ENCODE measurements at regions of chr10 and their contacts with region 1.

Region 1: GRCh38 chr10:28302638-28303488 is at the start of gene MPP7:
- DNase-seq: peak; percentile 100
- H3K4me3 ChIP-seq: peak within 1 kb of the TSS; percentile 75
- H3K4me3 Mint-ChIP-seq: peak within 1 kb of the TSS; percentile 73
- H3K27ac Mint-ChIP-seq: peak within 1 kb of the TSS; percentile 81
- H3K4me1 ChIP-seq: peaks cover 30% of the 10 kb centered on the region
- H3K4me1 Mint-ChIP-seq: peaks cover 43% of the 10 kb centered on the region
- H3K27me3 ChIP-seq: no peaks in the 10 kb centered on the region
- H3K27me3 Mint-ChIP-seq: no peaks in the 10 kb centered on the region
- CTCF ChIP-seq: peak; percentile 55 to 59
- total RNA-seq, gene MPP7: 72.0 and 79.4 TPM in 2 replicates

Region 2: GRCh38 chr10:28241741-28242399 is 61.0 kb before region 1 on chr10:
- CTCF ChIA-PET with region 1: interaction called, 12 read pairs
- POLR2A ChIA-PET with region 1: interaction called, 3 read pairs
- intact Hi-C with region 1: no loop called
- DNase-seq: peak in 1 of 2 experiments; percentile 67
- H3K4me3 ChIP-seq: no peak overlapping the region
- H3K4me3 Mint-ChIP-seq: no peak overlapping the region
- H3K27ac Mint-ChIP-seq: no peak overlapping the region
- H3K4me1 ChIP-seq: peaks cover 13% of the 10 kb centered on the region
- H3K4me1 Mint-ChIP-seq: no peaks in the 10 kb centered on the region
- H3K27me3 ChIP-seq: no peaks in the 10 kb centered on the region
- H3K27me3 Mint-ChIP-seq: no peaks in the 10 kb centered on the region
- CTCF ChIP-seq: peak; percentile 91 to 92

Region 3: DNA sequence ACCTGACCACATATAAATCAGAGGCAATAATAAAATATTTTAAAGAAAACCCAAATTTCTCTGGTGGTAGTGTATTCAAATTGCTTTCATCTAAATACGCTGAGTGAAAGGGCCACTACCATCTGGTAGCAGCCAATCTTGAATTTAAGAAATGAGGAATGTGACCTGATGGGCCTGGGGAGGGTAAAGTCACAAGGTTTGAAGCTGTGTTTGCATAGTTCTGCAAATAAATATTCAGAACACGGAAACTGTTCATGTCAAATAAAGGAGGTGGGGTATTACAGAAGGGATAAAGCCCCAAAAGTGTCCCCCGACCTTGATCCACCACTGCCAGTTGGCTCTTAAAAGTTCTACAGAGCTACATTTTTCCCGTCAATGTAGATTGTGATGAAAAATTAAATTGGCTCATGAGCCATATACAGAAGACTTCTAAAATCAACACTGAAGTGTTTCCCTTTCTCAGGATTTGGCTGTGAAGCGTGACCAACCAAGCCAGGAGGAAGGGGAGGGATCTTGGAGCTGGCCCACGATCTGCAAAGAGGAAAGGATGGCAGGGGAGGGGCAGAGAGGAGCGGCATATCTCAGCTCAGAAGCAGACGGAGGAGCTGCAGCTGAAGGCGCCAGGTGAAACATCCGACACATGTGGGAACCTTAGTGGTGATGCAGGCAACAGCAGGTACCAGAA is 39.6 kb before region 1 on chr10:
- CTCF ChIA-PET with region 1: interaction called, 31 read pairs
- POLR2A ChIA-PET with region 1: interaction called, 12 read pairs
- intact Hi-C with region 1: loop called (anchors 2 kb)
- DNase-seq: peak; percentile 63
- H3K4me3 ChIP-seq: no peak overlapping the region
- H3K4me3 Mint-ChIP-seq: peak overlapping the region; percentile 61
- H3K27ac Mint-ChIP-seq: peak overlapping the region; percentile 79
- H3K4me1 ChIP-seq: peaks cover 27% of the 10 kb centered on the region
- H3K4me1 Mint-ChIP-seq: peaks cover 19% of the 10 kb centered on the region
- H3K27me3 ChIP-seq: no peaks in the 10 kb centered on the region
- H3K27me3 Mint-ChIP-seq: no peaks in the 10 kb centered on the region
- CTCF ChIP-seq: no peak

Region 4: DNA sequence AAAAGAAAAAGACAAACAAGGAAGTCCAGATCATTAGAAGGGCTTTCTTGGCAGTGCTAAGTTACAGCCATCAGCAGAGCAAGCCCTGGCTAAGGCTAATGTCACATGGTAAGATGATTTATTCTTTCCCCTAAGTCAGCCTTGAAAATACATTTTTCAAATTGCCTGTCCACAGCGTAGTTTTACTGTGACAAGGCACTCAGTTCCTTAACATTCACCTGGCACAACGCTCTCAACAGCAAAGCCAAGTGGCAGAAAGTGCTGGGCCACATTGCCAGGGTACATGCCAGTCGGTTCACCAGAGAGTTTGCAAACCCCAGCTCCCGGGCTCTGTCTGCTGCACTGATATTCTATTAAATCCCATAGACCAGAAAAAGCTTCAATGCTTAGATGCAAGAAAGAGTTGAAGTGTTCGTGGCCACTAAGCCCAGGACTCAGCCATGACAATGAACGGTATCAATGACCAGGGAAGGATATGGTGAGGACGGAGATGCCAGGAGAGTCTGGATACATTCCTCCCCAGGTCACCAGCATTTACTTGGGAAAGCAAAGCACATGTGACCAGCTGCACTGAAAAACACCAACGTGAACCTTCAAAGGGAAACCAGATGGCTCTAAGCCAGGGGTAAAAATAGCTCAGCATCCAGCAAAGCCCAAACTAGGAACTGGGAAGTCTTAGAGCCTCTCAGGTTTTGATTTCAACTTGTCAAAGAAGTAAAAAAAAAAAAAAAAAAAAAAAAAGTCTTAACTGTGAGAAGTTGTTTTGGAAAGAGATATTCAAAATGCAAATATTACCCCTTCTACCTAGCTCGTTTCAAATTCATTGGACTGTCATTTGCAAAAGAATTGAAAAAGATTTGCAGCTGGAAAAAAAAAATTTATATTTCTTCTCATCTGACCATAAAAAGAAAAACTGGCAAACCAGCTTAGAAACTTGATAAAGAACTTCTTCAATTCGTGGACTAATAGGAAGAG is 23.9 kb after region 1 on chr10:
- CTCF ChIA-PET with region 1: interaction called, 24 read pairs
- POLR2A ChIA-PET with region 1: interaction called, 23 read pairs
- intact Hi-C with region 1: no loop called
- DNase-seq: no peak
- H3K4me3 ChIP-seq: no peak overlapping the region
- H3K4me3 Mint-ChIP-seq: no peak overlapping the region
- H3K27ac Mint-ChIP-seq: no peak overlapping the region
- H3K4me1 ChIP-seq: peaks cover 12% of the 10 kb centered on the region
- H3K4me1 Mint-ChIP-seq: peaks cover 29% of the 10 kb centered on the region
- H3K27me3 ChIP-seq: no peaks in the 10 kb centered on the region
- H3K27me3 Mint-ChIP-seq: no peaks in the 10 kb centered on the region
- CTCF ChIP-seq: no peak

Region 5: DNA sequence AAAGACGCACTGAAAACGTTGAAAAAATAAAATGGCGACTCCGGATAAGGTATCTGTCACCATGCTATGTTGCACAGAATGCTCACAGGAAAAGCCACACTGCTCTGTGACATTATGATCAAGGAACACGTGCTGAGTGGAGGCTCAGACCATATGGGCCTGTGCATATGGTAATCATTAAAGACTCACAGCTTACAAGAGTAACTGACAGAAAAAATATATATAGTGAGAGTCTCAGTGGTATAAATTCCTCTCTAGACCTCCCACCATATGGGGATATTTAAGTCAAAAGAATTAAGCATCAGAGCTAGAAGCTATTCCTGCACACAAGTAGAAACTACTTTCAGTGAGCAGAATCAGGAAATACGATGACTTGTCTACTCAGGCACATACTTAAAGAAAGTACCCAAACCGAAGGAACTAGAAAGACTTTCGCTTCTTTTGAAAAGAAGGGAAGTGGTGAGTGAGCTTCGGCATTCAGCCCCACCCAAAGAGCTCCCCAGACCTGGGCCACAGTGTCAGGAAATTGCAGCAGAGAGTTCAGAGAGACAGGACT is 65.1 kb after region 1 on chr10:
- CTCF ChIA-PET with region 1: interaction called, 38 read pairs
- POLR2A ChIA-PET with region 1: interaction called, 26 read pairs
- intact Hi-C with region 1: loop called (anchors 1 kb)
- DNase-seq: no peak
- H3K4me3 ChIP-seq: no peak overlapping the region
- H3K4me3 Mint-ChIP-seq: no peak overlapping the region
- H3K27ac Mint-ChIP-seq: peak overlapping the region; percentile 86
- H3K4me1 ChIP-seq: peaks cover 59% of the 10 kb centered on the region
- H3K4me1 Mint-ChIP-seq: peaks cover 46% of the 10 kb centered on the region
- H3K27me3 ChIP-seq: no peaks in the 10 kb centered on the region
- H3K27me3 Mint-ChIP-seq: no peaks in the 10 kb centered on the region
- CTCF ChIP-seq: no peak

Region 6: GRCh38 chr10:28381903-28382347 is 79.1 kb after region 1 on chr10:
- CTCF ChIA-PET with region 1: interaction called, 174 read pairs
- POLR2A ChIA-PET with region 1: interaction called, 48 read pairs
- intact Hi-C with region 1: loop called (anchors 1 kb)
- DNase-seq: peak; percentile 93 to 95
- H3K4me3 ChIP-seq: no peak overlapping the region
- H3K4me3 Mint-ChIP-seq: no peak overlapping the region
- H3K27ac Mint-ChIP-seq: no peak overlapping the region
- H3K4me1 ChIP-seq: peaks cover 30% of the 10 kb centered on the region
- H3K4me1 Mint-ChIP-seq: peaks cover 44% of the 10 kb centered on the region
- H3K27me3 ChIP-seq: no peaks in the 10 kb centered on the region
- H3K27me3 Mint-ChIP-seq: no peaks in the 10 kb centered on the region
- CTCF ChIP-seq: peak; percentile 96 to 97

Region 7: DNA sequence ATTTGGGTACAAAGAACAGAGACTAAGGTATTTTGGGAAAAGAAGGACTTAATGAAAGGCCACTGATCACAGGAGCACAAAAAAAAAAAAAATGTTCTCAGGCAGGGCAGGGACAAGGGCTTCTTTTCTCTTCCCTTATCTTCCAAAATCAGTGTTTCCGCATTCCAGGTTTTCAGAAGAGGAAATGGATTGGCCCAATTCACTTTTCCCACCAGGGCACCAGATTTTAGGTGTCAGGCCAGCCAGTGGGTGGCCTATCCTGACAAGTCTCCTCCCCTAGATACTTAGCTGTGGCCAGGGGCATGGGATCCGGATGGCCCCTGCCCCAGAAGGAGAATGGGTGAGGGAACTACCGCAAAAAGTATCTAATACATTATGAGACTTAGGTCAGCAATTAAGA is 141.2 kb after region 1 on chr10:
- CTCF ChIA-PET with region 1: no interaction called
- POLR2A ChIA-PET with region 1: no interaction called
- intact Hi-C with region 1: no loop called
- DNase-seq: peak in 1 of 2 experiments; percentile 24
- H3K4me3 ChIP-seq: no peak overlapping the region
- H3K4me3 Mint-ChIP-seq: no peak overlapping the region
- H3K27ac Mint-ChIP-seq: no peak overlapping the region
- H3K4me1 ChIP-seq: peaks cover 10% of the 10 kb centered on the region
- H3K4me1 Mint-ChIP-seq: peaks cover 10% of the 10 kb centered on the region
- H3K27me3 ChIP-seq: no peaks in the 10 kb centered on the region
- H3K27me3 Mint-ChIP-seq: no peaks in the 10 kb centered on the region
- CTCF ChIP-seq: no peak

Region 8: DNA sequence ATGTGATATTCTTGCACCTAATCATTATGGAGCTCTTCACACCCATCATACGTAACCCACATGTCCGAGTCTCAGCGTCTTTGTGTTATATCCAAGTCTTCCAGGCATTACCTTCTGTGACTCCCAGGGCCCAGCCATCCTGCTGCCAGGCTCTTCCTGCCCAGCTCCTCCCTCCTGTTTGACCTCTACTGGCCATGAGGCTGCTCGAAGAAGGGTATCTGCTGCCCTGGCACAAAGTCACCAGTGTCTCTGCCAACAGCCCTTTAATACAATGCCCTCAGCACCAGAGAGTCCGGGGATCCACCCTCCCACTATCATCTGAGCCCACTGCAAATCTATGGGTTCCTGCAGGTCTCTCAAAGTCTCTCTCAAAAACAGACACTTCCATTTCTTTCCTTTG is 164.8 kb after region 1 on chr10:
- CTCF ChIA-PET with region 1: no interaction called
- POLR2A ChIA-PET with region 1: no interaction called
- intact Hi-C with region 1: no loop called
- DNase-seq: no peak
- H3K4me3 ChIP-seq: no peak overlapping the region
- H3K4me3 Mint-ChIP-seq: no peak overlapping the region
- H3K27ac Mint-ChIP-seq: no peak overlapping the region
- H3K4me1 ChIP-seq: no peaks in the 10 kb centered on the region
- H3K4me1 Mint-ChIP-seq: no peaks in the 10 kb centered on the region
- H3K27me3 ChIP-seq: no peaks in the 10 kb centered on the region; the same call in 1 of the 2 replicates
- H3K27me3 Mint-ChIP-seq: no peaks in the 10 kb centered on the region
- CTCF ChIP-seq: no peak